ENCODE measurements at regions of chr22 and their contacts with region 1.

Region 1: GRCh38 chr22:49305214-49305909 is 522.3 kb downstream of the BRD1 start:
- DNase-seq: peak in 4 of 5 donors; percentile 24 to 36 (median 26)
- H3K4me3 ChIP-seq: no peak overlapping the region
- H3K4me3 Mint-ChIP-seq: no peak overlapping the region
- H3K27ac ChIP-seq: no peak overlapping the region
- H3K27ac Mint-ChIP-seq: no peak overlapping the region
- H3K4me1 ChIP-seq: no peaks in the 10 kb centered on the region
- H3K4me1 Mint-ChIP-seq: peaks cover 0 to 3% (median 0%) of the 10 kb centered on the region in 4 donors
- H3K27me3 ChIP-seq: no peaks in the 10 kb centered on the region
- H3K27me3 Mint-ChIP-seq: peaks cover 14 to 17% of the 10 kb centered on the region in 2 donors

Region 2: DNA sequence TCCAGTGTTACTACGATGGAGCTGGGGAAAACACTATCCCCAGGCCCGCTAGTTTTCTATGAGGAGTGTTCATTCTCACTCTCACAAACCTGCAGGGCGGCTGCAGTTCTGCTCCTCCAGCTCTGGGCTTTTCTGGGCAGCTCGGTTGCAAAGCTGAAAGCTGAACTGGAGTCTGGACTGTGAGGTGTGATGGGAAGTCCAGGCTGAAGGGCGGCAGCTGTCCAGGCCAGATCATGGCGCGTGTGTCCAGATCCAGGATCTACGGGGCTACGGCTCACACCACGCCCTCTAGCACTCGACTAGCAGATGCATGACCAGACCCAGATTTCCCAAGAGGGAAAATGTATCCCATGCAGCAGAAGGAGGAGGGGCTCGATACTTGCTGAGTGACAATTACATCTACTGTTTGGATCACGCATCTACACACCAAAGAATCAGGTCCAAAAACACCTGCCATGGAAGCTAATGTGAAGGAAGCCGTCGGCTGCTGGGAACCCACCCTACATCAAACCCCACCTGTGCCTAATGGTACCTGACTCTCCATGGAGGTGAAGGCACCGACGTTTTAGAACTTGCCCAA is 32.7 kb before region 1 on chr22:
- CTCF ChIA-PET with region 1: no interaction called
- POLR2A ChIA-PET with region 1: no interaction called
- intact Hi-C with region 1: no loop called
- DNase-seq: no peak
- H3K4me3 ChIP-seq: no peak overlapping the region
- H3K4me3 Mint-ChIP-seq: no peak overlapping the region
- H3K27ac ChIP-seq: no peak overlapping the region
- H3K27ac Mint-ChIP-seq: no peak overlapping the region
- H3K4me1 ChIP-seq: no peaks in the 10 kb centered on the region
- H3K4me1 Mint-ChIP-seq: no peaks in the 10 kb centered on the region
- H3K27me3 ChIP-seq: no peaks in the 10 kb centered on the region
- H3K27me3 Mint-ChIP-seq: peaks cover 17 to 25% of the 10 kb centered on the region in 2 donors

Region 3: DNA sequence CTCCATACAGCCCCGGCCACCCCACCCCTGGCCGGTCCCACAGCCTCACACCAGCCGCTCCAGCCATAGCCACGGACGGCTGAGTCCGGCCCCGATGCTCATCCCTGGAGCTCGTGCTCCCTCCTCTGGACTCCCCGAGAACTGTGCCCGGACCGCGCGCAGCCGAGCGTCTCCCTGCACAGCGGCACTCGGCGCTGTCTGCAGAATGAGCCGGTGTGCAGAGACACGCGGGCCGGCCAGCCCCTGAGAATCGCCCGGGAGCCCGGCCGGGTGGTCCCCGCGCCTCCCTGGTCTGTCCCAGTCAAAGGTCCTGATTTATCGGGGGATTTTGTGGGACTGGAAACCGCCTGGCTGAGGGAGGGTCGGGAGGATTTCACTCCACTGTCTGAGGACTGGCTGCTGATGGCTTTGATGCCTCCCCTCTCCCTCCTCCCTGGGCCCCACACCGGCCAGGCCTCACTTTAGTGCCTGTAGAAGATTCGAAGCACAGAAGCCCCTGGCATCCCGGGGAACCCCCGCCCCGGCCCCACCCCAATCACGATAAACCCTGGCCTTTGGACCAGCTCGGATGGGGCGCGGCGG is 419.6 kb after region 1 on chr22:
- CTCF ChIA-PET with region 1: no interaction called
- POLR2A ChIA-PET with region 1: no interaction called
- intact Hi-C with region 1: loop called (anchors 10 kb)
- DNase-seq: peak; percentile 50 to 62 (median 56)
- H3K4me3 ChIP-seq: peak overlapping the region; percentile 36 to 75
- H3K4me3 Mint-ChIP-seq: peak overlapping the region; percentile 49 to 85 (median 75)
- H3K27ac ChIP-seq: no peak overlapping the region
- H3K27ac Mint-ChIP-seq: no peak overlapping the region
- H3K4me1 ChIP-seq: peaks cover 13% of the 10 kb centered on the region
- H3K4me1 Mint-ChIP-seq: peaks cover 6 to 11% (median 9%) of the 10 kb centered on the region in 4 donors
- H3K27me3 ChIP-seq: no peaks in the 10 kb centered on the region
- H3K27me3 Mint-ChIP-seq: peaks cover 12 to 14% of the 10 kb centered on the region in 2 donors

Measured in CD4-positive, alpha-beta memory T cell (primary cell).